MCF 10A (cell line): ENCODE measurements at regions of chr16 and their contacts with region 1.

Region 1: GRCh38 chr16:89490387-89491237 is at the start of gene ANKRD11:
- DNase-seq: peak; percentile 99
- H3K4me3 Mint-ChIP-seq: peak within 1 kb of the TSS; percentile 88
- H3K27ac Mint-ChIP-seq: peak within 1 kb of the TSS; percentile 86
- H3K4me1 Mint-ChIP-seq: peaks cover 10% of the 10 kb centered on the region
- H3K27me3 Mint-ChIP-seq: no peaks in the 10 kb centered on the region
- CTCF ChIP-seq: no peak
- total RNA-seq, gene ANKRD11: 218 and 237 TPM in 2 replicates

Region 2: DNA sequence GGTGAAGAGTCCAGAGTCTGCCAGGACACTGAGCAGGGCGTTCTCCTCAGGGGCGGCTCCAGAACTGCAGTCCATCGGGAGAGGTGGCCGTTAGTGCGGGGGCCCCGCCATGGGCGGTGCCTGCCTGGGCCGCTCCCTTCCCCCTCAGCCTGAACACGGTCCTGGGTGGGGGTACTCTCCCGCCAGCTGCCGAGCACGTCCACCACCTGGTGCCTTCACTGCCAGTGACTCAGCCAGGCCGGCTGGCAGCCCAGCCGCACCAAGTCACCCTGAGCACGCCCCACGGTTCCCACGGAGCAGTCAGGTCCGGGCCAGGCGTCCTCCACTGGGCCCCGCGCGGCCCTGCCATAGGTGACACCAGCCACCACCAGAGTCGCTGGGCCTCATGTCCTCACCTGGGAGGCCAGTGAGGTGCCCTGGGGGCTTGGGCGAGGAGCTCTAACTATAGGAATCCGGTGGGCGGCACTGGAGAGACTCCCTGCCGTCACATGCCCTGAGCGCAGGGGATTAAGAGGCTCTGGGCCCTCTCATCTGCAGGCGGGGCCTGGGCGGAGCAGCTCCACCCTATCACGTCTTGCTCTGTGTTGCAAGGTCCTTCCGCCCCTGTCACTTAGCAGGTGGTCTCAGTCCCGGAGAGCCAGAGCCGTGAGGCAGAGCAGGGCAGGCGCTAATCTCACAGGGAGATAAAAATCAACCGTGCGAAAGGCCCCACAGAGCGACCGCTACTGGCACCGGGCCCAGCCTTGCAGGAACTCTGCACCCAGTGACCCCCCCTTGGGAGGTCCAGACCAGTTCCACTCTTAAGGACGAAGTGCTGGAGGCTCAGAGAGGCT is 719.9 kb before region 1 on chr16:
- CTCF ChIA-PET with region 1: no interaction called
- POLR2A ChIA-PET with region 1: no interaction called
- intact Hi-C with region 1: no loop called
- DNase-seq: peak; percentile 82
- H3K4me3 Mint-ChIP-seq: peak overlapping the region; percentile 57
- H3K27ac Mint-ChIP-seq: peak overlapping the region; percentile 61
- H3K4me1 Mint-ChIP-seq: peaks cover 32% of the 10 kb centered on the region
- H3K27me3 Mint-ChIP-seq: no peaks in the 10 kb centered on the region
- CTCF ChIP-seq: no peak

Region 3: GRCh38 chr16:89502319-89502878 is 11.8 kb after region 1 on chr16:
- CTCF ChIA-PET with region 1: interaction called, 5 read pairs
- POLR2A ChIA-PET with region 1: interaction called, 46 read pairs
- intact Hi-C with region 1: loop called (anchors 1 kb)
- DNase-seq: peak; percentile 51
- H3K4me3 Mint-ChIP-seq: peak overlapping the region; percentile 43
- H3K27ac Mint-ChIP-seq: peak overlapping the region; percentile 95
- H3K4me1 Mint-ChIP-seq: peaks cover 24% of the 10 kb centered on the region
- H3K27me3 Mint-ChIP-seq: no peaks in the 10 kb centered on the region
- CTCF ChIP-seq: no peak